Ovary (tissue), 10 donors: ENCODE measurements at regions of chr6 and their contacts with region 1.

Region 1: GRCh38 chr6:137873273-137873762 is 6.3 kb downstream of the TNFAIP3 start:
- DNase-seq: peak in 4 of 5 donors; percentile 52 to 81 (median 64)
- H3K4me3 ChIP-seq: peak overlapping the region; percentile 7
- H3K27ac ChIP-seq: no peak overlapping the region
- H3K4me1 ChIP-seq: peaks cover 10% of the 10 kb centered on the region
- H3K27me3 ChIP-seq: no peaks in the 10 kb centered on the region
- CTCF ChIP-seq: no peak
- EP300 ChIP-seq: no peak
- POLR2A ChIP-seq: no peak

Region 2: GRCh38 chr6:137944793-137945498 is 71.6 kb after region 1 on chr6:
- intact Hi-C with region 1: loop called in 2 of 4 experiments (anchors 5 to 10 kb)
- DNase-seq: peak in 2 of 5 donors; percentile 14 to 31
- H3K4me3 ChIP-seq: no peak overlapping the region
- H3K27ac ChIP-seq: no peak overlapping the region
- H3K4me1 ChIP-seq: no peaks in the 10 kb centered on the region
- H3K27me3 ChIP-seq: no peaks in the 10 kb centered on the region
- CTCF ChIP-seq: peak; percentile 52 to 86 (median 77)
- EP300 ChIP-seq: no peak
- POLR2A ChIP-seq: no peak